Mammary epithelial cell (primary cell): ENCODE measurements at regions of chr3 and their contacts with region 1.

Region 1: DNA sequence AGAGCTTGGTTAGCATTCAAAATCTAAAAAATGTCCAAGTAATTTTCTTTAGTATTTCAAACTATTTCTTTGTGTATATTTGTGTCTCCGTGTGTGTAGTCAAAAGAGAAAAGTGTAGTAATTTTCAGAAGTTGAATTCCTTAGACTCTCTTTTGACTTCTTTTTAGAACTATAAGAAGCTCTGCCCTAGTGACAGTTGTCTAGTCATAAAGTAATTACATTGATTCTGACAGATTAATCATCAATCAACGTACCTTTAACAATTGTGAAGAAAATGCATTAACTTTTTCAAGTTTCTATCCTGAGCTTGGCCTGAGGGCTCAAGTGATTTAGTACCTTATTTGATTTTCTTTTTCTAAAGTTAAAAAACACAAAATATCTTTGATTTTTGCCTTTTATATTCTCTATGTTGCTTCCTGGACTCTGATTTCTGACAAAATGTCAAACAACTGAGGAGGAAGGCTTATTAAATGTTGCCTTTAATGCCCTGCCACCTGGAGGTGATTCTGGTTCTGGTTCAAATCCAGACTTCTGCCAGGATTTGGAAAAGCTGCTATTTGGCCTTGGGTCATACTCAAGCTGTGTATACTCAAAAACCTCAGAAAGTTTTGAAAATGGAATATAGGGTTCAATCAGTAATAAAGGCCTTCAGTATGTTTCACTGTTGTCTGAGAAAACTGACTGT is 653.6 kb downstream of the NSUN3 start:
- DNase-seq: no peak
- H3K4me3 ChIP-seq: no peak overlapping the region
- H3K27ac ChIP-seq: no peak overlapping the region
- H3K4me1 ChIP-seq: no peaks in the 10 kb centered on the region
- H3K27me3 ChIP-seq: no peaks in the 10 kb centered on the region
- CTCF ChIP-seq: peak in 1 of 2 donors; percentile 37

Region 2: DNA sequence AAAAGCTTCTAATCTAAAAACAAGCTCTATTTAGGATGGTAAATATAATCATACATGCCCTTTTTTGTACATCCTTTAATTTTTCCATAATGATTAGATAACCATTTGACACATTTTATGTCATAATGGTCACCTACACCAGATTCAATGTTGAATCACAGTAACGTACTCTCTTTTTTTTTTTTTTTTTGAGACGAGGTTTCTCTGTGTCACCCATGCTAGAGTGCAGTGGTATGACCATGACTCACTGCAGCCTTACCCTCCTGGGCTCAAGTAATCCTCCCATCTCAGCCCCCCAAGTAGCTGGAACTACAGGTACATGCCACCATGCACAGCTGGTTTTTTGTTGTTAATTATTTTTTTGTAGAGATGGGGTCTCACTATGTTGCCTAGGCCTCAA is 792.0 kb before region 1 on chr3:
- CTCF ChIA-PET with region 1: no interaction called
- dilution Hi-C with region 1: no loop called
- in situ Hi-C with region 1: no loop called
- intact Hi-C with region 1: no loop called
- DNase-seq: peak; percentile 7
- H3K4me3 ChIP-seq: no peak overlapping the region
- H3K27ac ChIP-seq: no peak overlapping the region
- H3K4me1 ChIP-seq: no peaks in the 10 kb centered on the region
- H3K27me3 ChIP-seq: no peaks in the 10 kb centered on the region
- CTCF ChIP-seq: no peak

Region 3: GRCh38 chr3:94249585-94249984 is 466.9 kb before region 1 on chr3:
- CTCF ChIA-PET with region 1: no interaction called
- dilution Hi-C with region 1: no loop called
- in situ Hi-C with region 1: no loop called
- intact Hi-C with region 1: loop called (anchors 10 kb)
- DNase-seq: peak; percentile 47
- H3K4me3 ChIP-seq: no peak overlapping the region
- H3K27ac ChIP-seq: no peak overlapping the region
- H3K4me1 ChIP-seq: no peaks in the 10 kb centered on the region
- H3K27me3 ChIP-seq: peaks cover 2% of the 10 kb centered on the region
- CTCF ChIP-seq: peak; percentile 85 to 89

Region 4: GRCh38 chr3:94336046-94336710 is 380.3 kb before region 1 on chr3:
- CTCF ChIA-PET with region 1: no interaction called
- dilution Hi-C with region 1: no loop called
- in situ Hi-C with region 1: no loop called
- intact Hi-C with region 1: loop called (anchors 1 kb)
- DNase-seq: peak; percentile 40
- H3K4me3 ChIP-seq: no peak overlapping the region
- H3K27ac ChIP-seq: no peak overlapping the region
- H3K4me1 ChIP-seq: no peaks in the 10 kb centered on the region
- H3K27me3 ChIP-seq: no peaks in the 10 kb centered on the region
- CTCF ChIP-seq: peak; percentile 53 to 63

Region 5: DNA sequence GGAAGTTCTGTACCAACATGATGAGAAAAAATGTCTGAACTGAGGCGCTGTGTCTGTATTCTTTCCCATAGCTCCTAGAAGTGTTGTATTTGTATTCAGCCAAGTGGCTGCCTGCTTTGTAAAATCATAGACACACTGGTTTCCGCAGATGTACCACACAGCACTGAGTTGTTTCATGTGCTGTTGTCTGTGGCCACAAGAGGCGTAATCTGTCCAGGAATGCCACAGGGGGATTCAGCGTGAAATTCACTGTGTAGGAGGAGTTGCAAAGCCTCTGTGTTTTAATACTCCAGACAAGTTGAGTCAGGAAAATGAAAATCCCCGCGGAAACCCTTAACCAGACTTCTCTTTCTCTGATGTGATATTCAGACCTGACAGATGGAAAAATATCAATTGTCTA is 191.4 kb before region 1 on chr3:
- CTCF ChIA-PET with region 1: no interaction called
- dilution Hi-C with region 1: no loop called
- in situ Hi-C with region 1: no loop called
- intact Hi-C with region 1: loop called (anchors 1 kb)
- DNase-seq: peak; percentile 14
- H3K4me3 ChIP-seq: no peak overlapping the region
- H3K27ac ChIP-seq: no peak overlapping the region
- H3K4me1 ChIP-seq: no peaks in the 10 kb centered on the region
- H3K27me3 ChIP-seq: no peaks in the 10 kb centered on the region
- CTCF ChIP-seq: peak; percentile 65 to 70

Region 6: GRCh38 chr3:94612631-94613030 is 103.8 kb before region 1 on chr3:
- CTCF ChIA-PET with region 1: no interaction called
- dilution Hi-C with region 1: no loop called
- in situ Hi-C with region 1: no loop called
- intact Hi-C with region 1: loop called (anchors 5 kb)
- DNase-seq: no peak
- H3K4me3 ChIP-seq: no peak overlapping the region
- H3K27ac ChIP-seq: no peak overlapping the region
- H3K4me1 ChIP-seq: peaks cover 11% of the 10 kb centered on the region
- H3K27me3 ChIP-seq: no peaks in the 10 kb centered on the region
- CTCF ChIP-seq: no peak

Region 7: GRCh38 chr3:95280711-95281352 is 564.4 kb after region 1 on chr3:
- CTCF ChIA-PET with region 1: no interaction called
- dilution Hi-C with region 1: no loop called
- in situ Hi-C with region 1: no loop called
- intact Hi-C with region 1: no loop called
- DNase-seq: no peak
- H3K4me3 ChIP-seq: no peak overlapping the region
- H3K27ac ChIP-seq: no peak overlapping the region
- H3K4me1 ChIP-seq: no peaks in the 10 kb centered on the region
- H3K27me3 ChIP-seq: no peaks in the 10 kb centered on the region
- CTCF ChIP-seq: no peak